Naive thymus-derived CD4-positive, alpha-beta T cell (primary cell): ENCODE measurements at regions of chr2 and their contacts with region 1.

Region 1: DNA sequence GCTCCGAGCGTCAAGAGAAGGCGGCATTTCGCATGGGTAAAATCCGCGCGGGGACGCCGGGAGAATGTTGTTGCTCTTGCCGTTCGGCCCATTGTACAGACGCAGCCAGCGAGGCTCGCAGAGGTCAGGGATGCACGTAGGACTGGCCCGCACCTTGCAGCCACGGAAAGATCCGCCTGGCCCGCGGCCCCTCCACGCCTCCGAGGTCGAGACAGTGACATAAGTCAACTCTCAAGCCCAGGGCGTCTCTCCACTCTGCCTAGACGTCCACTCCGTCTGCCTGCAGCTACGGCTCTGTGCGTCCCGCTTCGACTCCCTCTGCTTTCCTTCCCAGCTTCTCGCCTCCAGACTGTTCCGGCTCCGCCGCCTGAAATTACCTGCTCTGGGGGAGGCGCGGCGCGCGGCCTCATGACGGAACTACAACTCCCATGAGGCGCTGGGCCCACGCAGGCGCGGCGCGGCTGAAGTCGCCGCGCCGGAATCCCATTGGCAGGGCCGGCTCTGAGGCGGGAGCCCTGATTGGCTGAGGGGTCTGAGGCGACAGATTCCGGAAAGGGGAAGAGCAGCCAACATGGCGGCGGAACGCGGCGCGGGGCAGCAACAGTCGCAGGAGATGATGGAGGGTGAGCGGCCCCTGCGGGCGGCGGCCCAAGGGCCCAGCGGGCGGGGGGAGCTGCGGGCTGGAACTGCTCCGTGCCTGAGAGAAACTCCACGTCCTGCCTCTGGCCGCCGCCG is at the start of gene PPP1R7:
- DNase-seq: peak; percentile 83 to 96 (median 93)
- ATAC-seq: peak; percentile 87
- H3K4me3 ChIP-seq: peak within 1 kb of the TSS; percentile 97
- H3K4me3 Mint-ChIP-seq: peak within 1 kb of the TSS; percentile 95 to 100 (median 98)
- H3K27ac ChIP-seq: peak within 1 kb of the TSS; percentile 71
- H3K27ac Mint-ChIP-seq: peak within 1 kb of the TSS; percentile 85 to 97 (median 94)
- H3K4me1 ChIP-seq: peaks cover 13 to 26% of the 10 kb centered on the region in 2 donors
- H3K4me1 Mint-ChIP-seq: peaks cover 33 to 58% (median 51%) of the 10 kb centered on the region in 7 donors
- H3K27me3 ChIP-seq: no peaks in the 10 kb centered on the region
- H3K27me3 Mint-ChIP-seq: no peaks in the 10 kb centered on the region
- total RNA-seq, gene PPP1R7: 39.2 to 105 (median 55.3) TPM

Region 2: GRCh38 chr2:240832205-240832727 is 317.8 kb before region 1 on chr2:
- CTCF ChIA-PET with region 1: no interaction called
- POLR2A ChIA-PET with region 1: no interaction called
- intact Hi-C with region 1: loop called (anchors 1 kb)
- DNase-seq: peak; percentile 93 to 100 (median 99)
- ATAC-seq: peak; percentile 96
- H3K4me3 ChIP-seq: peak overlapping the region; percentile 32
- H3K4me3 Mint-ChIP-seq: peak overlapping the region in 8 of 10 donors; percentile 56 to 78 (median 71)
- H3K27ac ChIP-seq: no peak overlapping the region
- H3K27ac Mint-ChIP-seq: peak overlapping the region in 4 of 9 donors; percentile 22 to 88 (median 74)
- H3K4me1 ChIP-seq: peaks cover 11 to 14% of the 10 kb centered on the region in 2 donors
- H3K4me1 Mint-ChIP-seq: peaks cover 0 to 7% (median 0%) of the 10 kb centered on the region in 7 donors
- H3K27me3 ChIP-seq: no peaks in the 10 kb centered on the region
- H3K27me3 Mint-ChIP-seq: peaks cover 4 to 30% (median 19%) of the 10 kb centered on the region in 5 donors

Region 3: GRCh38 chr2:241009601-241010530 is 140.2 kb before region 1 on chr2:
- CTCF ChIA-PET with region 1: interaction called, 6 read pairs
- POLR2A ChIA-PET with region 1: interaction called, 8 read pairs
- intact Hi-C with region 1: loop called in 1 of 2 experiments (anchors 1 kb)
- DNase-seq: peak in 8 of 9 donors; percentile 31 to 78 (median 68)
- ATAC-seq: peak; percentile 80
- H3K4me3 ChIP-seq: peak overlapping the region; percentile 51
- H3K4me3 Mint-ChIP-seq: peak overlapping the region; percentile 37 to 95 (median 74)
- H3K27ac ChIP-seq: peak overlapping the region; percentile 64
- H3K27ac Mint-ChIP-seq: peak overlapping the region; percentile 80 to 94 (median 90)
- H3K4me1 ChIP-seq: peaks cover 3 to 36% of the 10 kb centered on the region in 2 donors
- H3K4me1 Mint-ChIP-seq: peaks cover 16 to 47% (median 40%) of the 10 kb centered on the region in 7 donors
- H3K27me3 ChIP-seq: no peaks in the 10 kb centered on the region
- H3K27me3 Mint-ChIP-seq: peaks cover 0 to 26% (median 0%) of the 10 kb centered on the region in 5 donors

Region 4: GRCh38 chr2:241096979-241097378 is 53.1 kb before region 1 on chr2:
- CTCF ChIA-PET with region 1: interaction called, 7 read pairs
- POLR2A ChIA-PET with region 1: interaction called, 150 read pairs
- intact Hi-C with region 1: loop called (anchors 1 kb)
- DNase-seq: no peak
- ATAC-seq: no peak
- H3K4me3 ChIP-seq: no peak overlapping the region
- H3K4me3 Mint-ChIP-seq: peak overlapping the region in 4 of 10 donors; percentile 54 to 94 (median 62)
- H3K27ac ChIP-seq: no peak overlapping the region
- H3K27ac Mint-ChIP-seq: peak overlapping the region in 8 of 9 donors; percentile 45 to 99 (median 92)
- H3K4me1 ChIP-seq: peaks cover 35 to 58% of the 10 kb centered on the region in 2 donors
- H3K4me1 Mint-ChIP-seq: peaks cover 42 to 85% (median 79%) of the 10 kb centered on the region in 7 donors
- H3K27me3 ChIP-seq: no peaks in the 10 kb centered on the region
- H3K27me3 Mint-ChIP-seq: no peaks in the 10 kb centered on the region

Region 5: GRCh38 chr2:241217320-241218031 is 67.4 kb after region 1 on chr2:
- CTCF ChIA-PET with region 1: no interaction called
- POLR2A ChIA-PET with region 1: no interaction called
- intact Hi-C with region 1: loop called (anchors 5 kb)
- DNase-seq: peak in 7 of 9 donors; percentile 10 to 50 (median 36)
- ATAC-seq: peak; percentile 53
- H3K4me3 ChIP-seq: peak overlapping the region; percentile 44
- H3K4me3 Mint-ChIP-seq: peak overlapping the region; percentile 62 to 89 (median 79)
- H3K27ac ChIP-seq: peak overlapping the region; percentile 17
- H3K27ac Mint-ChIP-seq: peak overlapping the region in 6 of 9 donors; percentile 21 to 66 (median 33)
- H3K4me1 ChIP-seq: peaks cover 0 to 6% of the 10 kb centered on the region in 2 donors
- H3K4me1 Mint-ChIP-seq: peaks cover 9 to 15% (median 11%) of the 10 kb centered on the region in 7 donors
- H3K27me3 ChIP-seq: no peaks in the 10 kb centered on the region
- H3K27me3 Mint-ChIP-seq: peaks cover 0 to 21% (median 0%) of the 10 kb centered on the region in 5 donors

Region 6: GRCh38 chr2:241702132-241703031 is 552.3 kb after region 1 on chr2:
- CTCF ChIA-PET with region 1: no interaction called
- POLR2A ChIA-PET with region 1: no interaction called
- intact Hi-C with region 1: loop called in 1 of 2 experiments (anchors 10 kb)
- DNase-seq: peak; percentile 83 to 92 (median 89)
- ATAC-seq: peak; percentile 89
- H3K4me3 ChIP-seq: peak overlapping the region; percentile 74
- H3K4me3 Mint-ChIP-seq: peak overlapping the region; percentile 74 to 89 (median 84)
- H3K27ac ChIP-seq: peak overlapping the region; percentile 75
- H3K27ac Mint-ChIP-seq: peak overlapping the region; percentile 75 to 87 (median 82)
- H3K4me1 ChIP-seq: peaks cover 7 to 12% of the 10 kb centered on the region in 2 donors
- H3K4me1 Mint-ChIP-seq: peaks cover 11 to 38% (median 26%) of the 10 kb centered on the region in 7 donors
- H3K27me3 ChIP-seq: no peaks in the 10 kb centered on the region
- H3K27me3 Mint-ChIP-seq: no peaks in the 10 kb centered on the region

Region 7: GRCh38 chr2:241908686-241909420 is 758.8 kb after region 1 on chr2:
- CTCF ChIA-PET with region 1: no interaction called
- POLR2A ChIA-PET with region 1: no interaction called
- intact Hi-C with region 1: no loop called
- DNase-seq: no peak
- ATAC-seq: no peak
- H3K4me3 ChIP-seq: no peak overlapping the region
- H3K4me3 Mint-ChIP-seq: peak overlapping the region in 1 of 10 donors; percentile 34
- H3K27ac ChIP-seq: no peak overlapping the region
- H3K27ac Mint-ChIP-seq: no peak overlapping the region
- H3K4me1 ChIP-seq: no peaks in the 10 kb centered on the region
- H3K4me1 Mint-ChIP-seq: peaks cover 0 to 2% (median 0%) of the 10 kb centered on the region in 7 donors
- H3K27me3 ChIP-seq: no peaks in the 10 kb centered on the region
- H3K27me3 Mint-ChIP-seq: no peaks in the 10 kb centered on the region